Endothelial cell of umbilical vein (primary cell): ENCODE measurements at regions of chr1 and their contacts with region 1.

Region 1: DNA sequence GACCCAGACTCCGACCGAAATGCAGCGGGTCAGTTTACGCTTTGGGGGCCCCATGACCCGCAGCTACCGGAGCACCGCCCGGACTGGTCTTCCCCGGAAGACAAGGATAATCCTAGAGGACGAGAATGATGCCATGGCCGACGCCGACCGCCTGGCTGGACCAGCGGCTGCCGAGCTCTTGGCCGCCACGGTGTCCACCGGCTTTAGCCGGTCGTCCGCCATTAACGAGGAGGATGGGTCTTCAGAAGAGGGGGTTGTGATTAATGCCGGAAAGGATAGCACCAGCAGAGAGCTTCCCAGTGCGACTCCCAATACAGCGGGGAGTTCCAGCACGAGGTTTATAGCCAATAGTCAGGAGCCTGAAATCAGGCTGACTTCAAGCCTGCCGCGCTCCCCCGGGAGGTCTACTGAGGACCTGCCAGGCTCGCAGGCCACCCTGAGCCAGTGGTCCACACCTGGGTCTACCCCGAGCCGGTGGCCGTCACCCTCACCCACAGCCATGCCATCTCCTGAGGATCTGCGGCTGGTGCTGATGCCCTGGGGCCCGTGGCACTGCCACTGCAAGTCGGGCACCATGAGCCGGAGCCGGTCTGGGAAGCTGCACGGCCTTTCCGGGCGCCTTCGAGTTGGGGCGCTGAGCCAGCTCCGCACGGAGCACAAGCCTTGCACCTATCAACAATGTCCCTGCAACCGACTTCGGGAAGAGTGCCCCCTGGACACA is 534 bp downstream of the C1orf56 start:
- DNase-seq: peak; percentile 84
- H3K4me3 ChIP-seq: peak overlapping the region; percentile 66 to 76 (median 73)
- H3K27ac ChIP-seq: peak overlapping the region; percentile 26
- H3K4me1 ChIP-seq: peaks cover 8% of the 10 kb centered on the region
- H3K27me3 ChIP-seq: no peaks in the 10 kb centered on the region
- CTCF ChIP-seq: peak; percentile 40 to 74
- POLR2A ChIP-seq: peak; percentile 65

Region 2: DNA sequence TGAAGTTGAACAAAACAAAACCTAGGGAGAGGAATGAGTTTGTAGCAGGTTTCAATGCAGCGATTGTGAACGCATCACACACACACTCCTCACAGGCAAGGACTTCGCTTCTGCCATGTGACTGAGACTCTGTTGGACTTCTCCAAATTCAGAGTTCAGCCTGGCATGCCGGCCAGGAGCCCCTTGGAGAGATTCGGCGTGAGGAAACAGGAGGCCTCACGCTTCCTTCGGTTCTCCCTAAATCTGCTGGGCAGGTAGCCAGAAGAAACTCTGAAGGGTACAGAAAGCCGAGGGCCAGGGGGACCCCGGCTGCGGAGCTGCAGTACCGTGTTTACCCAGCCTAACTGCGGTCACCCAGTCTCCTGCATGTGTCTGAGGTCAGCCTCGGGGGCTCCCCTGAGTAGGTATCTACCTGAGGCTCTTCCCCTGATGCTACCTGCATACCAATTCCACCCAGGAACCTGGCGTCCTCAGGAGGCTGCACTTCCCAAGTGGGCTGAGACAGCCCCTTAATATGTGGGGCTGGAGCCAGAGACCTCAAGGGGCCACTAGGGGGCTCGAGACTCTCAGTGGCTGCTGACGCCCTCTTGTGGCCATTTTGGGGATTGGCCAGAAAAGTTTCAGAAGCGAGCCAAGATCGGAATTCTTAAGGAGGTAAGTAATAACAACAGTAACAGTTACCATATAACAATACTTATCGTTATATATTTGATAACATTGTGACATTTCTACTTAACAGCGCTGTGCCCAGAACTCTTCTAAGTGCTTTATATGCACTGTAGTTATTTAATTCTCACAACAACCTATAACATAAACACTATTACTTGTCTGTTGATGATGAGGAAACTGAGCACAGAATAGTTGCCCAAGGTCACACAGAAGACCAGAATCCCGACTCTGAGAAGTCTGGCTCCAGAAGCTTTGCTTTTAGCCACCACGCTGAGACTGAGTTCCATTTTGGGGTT is 68.7 kb before region 1 on chr1:
- CTCF ChIA-PET with region 1: interaction called, 3 read pairs
- POLR2A ChIA-PET with region 1: no interaction called
- dilution Hi-C with region 1: no loop called
- intact Hi-C with region 1: loop called (anchors 1 kb)
- DNase-seq: peak; percentile 91
- H3K4me3 ChIP-seq: no peak overlapping the region
- H3K27ac ChIP-seq: no peak overlapping the region
- H3K4me1 ChIP-seq: peaks cover 22% of the 10 kb centered on the region
- H3K27me3 ChIP-seq: no peaks in the 10 kb centered on the region
- CTCF ChIP-seq: peak; percentile 100
- POLR2A ChIP-seq: no peak

Region 3: DNA sequence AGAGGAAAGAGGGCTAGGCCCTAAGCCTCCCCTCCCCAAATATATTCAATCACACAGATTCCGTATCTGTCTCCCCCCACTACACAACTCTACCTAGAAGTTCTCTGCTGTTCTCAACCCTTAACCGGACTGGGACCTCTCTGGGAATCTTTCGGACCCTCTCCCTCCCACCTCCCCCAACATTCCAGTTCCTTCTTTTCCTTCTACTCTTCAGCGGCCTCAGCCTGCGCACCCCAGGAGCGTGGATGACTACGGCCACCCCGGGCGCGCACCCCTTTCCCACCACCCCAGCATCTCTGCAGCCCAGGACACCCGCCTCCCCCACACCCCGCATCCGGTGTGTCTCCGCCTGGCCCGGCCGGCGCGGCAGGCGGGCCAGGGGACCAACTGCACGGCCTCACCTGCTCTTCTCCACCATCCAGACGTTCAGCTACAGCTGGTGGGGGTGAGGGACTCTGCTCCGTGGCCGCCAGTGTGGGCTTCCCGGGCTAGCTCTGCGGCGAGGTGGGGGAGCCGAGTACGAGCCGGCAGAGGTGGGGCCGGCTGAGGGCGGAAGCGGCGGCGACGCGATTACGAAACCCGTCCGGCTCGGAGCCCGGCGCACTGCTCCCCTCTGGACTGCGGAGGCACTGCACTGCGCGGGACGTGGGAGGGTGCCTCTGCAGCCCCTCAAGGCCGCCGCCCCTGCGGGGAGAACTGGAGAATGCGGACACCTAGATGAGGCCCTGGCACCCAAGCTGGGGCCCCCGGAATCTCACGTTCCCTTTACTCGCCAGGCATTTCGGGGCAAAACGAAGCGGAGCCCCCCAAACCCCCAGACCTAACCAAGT is 11.2 kb after region 1 on chr1 and contains the start of gene CDC42SE1:
- CTCF ChIA-PET with region 1: interaction called, 29 read pairs
- POLR2A ChIA-PET with region 1: interaction called, 3 read pairs
- dilution Hi-C with region 1: no loop called
- intact Hi-C with region 1: loop called (anchors 1 kb)
- DNase-seq: peak; percentile 87
- H3K4me3 ChIP-seq: peak within 1 kb of the TSS; percentile 82 to 94 (median 91)
- H3K27ac ChIP-seq: peak within 1 kb of the TSS; percentile 91
- H3K4me1 ChIP-seq: peaks cover 33% of the 10 kb centered on the region
- H3K27me3 ChIP-seq: no peaks in the 10 kb centered on the region
- CTCF ChIP-seq: peak; percentile 60 to 88
- POLR2A ChIP-seq: peak; percentile 89
- total RNA-seq, gene CDC42SE1: 85.9 and 92.7 TPM in 2 replicates